Activated CD4-positive, alpha-beta T cell treated with anti-CD3 and anti-CD28 coated beads, Interleukin-2, amount 10 ng/mL, durations not matched to agents 24 days and 14 days (primary cell): ENCODE measurements at regions of chr10 and their contacts with region 1.

Region 1: GRCh38 chr10:114937962-114938855 is at the start of gene TRUB1:
- DNase-seq: peak; percentile 96
- H3K4me3 Mint-ChIP-seq: peak within 1 kb of the TSS; percentile 94
- H3K27ac Mint-ChIP-seq: peak within 1 kb of the TSS; percentile 94
- H3K4me1 Mint-ChIP-seq: peaks cover 31% of the 10 kb centered on the region
- H3K27me3 Mint-ChIP-seq: no peaks in the 10 kb centered on the region
- total RNA-seq, gene TRUB1: 18.5 and 20.9 TPM in 2 replicates

Region 2: DNA sequence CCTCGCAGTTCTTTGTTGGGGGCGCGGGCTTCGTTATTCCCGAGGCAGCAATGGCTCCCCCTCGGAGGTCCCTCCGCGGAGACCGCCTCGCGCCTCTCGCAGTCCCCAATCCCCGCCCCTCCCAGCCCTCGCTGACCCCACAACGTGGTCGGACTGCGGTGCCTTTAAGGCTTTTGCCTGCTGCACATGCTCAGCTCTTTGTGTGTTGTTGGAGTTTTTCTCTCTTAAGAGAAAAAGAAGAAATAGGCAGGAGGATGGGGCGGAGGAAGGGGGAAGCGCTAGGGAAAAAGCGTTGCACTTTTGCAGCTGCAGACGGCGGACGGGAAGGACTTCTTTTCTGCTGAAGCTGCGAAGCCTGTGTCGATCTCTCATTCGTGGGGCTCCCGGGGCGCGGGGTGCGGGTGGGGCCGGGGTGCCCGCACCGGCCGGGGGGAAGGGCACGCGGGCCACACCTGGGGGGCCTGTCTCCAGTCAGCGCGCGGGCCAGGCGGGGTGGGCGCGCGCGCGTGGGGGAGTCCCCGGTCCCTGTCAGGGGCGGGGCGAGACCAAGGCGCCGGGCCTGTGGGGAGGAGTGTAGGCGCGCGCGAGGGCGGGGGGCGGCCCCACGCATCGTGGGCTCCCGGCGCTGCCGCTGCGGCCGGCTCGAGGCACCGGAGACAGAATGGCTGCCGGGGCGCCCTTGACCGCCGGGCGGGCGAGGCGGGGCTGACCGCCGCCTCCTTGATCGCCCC is 154.5 kb after region 1 on chr10:
- intact Hi-C with region 1: loop called (anchors 10 kb)
- DNase-seq: peak; percentile 81
- H3K4me3 Mint-ChIP-seq: peak overlapping the region; percentile 81
- H3K27ac Mint-ChIP-seq: no peak overlapping the region
- H3K4me1 Mint-ChIP-seq: peaks cover 10% of the 10 kb centered on the region
- H3K27me3 Mint-ChIP-seq: peaks cover 57% of the 10 kb centered on the region